Heart left ventricle (tissue), 16 donors: ENCODE measurements at regions of chr10 and their contacts with region 1.

Region 1: DNA sequence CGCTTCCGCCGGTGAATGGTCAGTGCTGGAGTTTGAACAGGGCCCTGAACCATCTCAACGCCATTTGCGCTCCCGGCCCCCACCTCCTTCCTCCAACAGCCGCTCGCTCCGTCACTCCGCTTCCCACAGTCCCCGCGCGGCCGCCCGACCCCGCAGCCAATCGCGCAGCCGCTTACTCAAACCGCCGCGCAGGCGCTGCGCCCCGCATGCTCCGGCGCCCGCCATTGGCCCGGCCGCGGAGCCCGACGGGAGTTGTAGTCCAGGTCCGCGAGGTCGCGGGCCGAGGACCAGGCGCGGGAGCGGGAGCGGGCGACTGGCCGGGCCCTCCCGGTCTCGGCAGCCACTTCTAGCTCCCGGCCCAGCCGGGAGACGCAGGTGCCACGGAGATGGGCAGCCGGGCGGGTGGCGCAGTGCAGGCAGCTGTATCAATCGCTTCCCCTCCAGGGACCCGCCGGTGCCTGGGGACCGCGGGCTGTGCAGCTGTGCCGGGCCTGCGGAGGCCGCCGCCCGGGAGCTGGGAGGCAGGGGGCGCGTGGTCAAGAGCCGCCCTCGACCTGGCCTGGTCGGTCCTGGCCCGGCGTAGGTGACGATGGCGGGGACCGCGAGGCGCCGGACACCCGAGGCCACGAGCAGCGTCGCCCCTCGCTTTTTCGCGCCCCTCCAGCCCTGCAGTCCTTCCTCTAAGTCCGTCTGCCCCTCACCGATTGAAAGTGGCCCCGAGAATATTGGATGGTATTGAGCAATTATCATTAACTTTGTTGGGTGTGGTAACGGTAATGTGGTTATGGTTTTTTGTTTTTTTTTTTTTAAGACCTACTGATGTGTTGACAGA is at the start of gene WAPL:
- DNase-seq: peak; percentile 96 to 97 (median 97)
- ATAC-seq: peak; percentile 97 to 99 (median 98)
- H3K4me3 ChIP-seq: peak within 1 kb of the TSS; percentile 83 to 100 (median 98)
- H3K27ac ChIP-seq: peak within 1 kb of the TSS; percentile 90 to 99 (median 97)
- H3K4me1 ChIP-seq: peaks cover 0 to 69% (median 43%) of the 10 kb centered on the region in 12 donors
- H3K27me3 ChIP-seq: no peaks in the 10 kb centered on the region
- CTCF ChIP-seq: no peak
- POLR2A ChIP-seq: peak in 1 of 2 donors; percentile 86
- total RNA-seq, gene WAPL: 19.7 to 29.9 (median 23.8) TPM

Region 2: DNA sequence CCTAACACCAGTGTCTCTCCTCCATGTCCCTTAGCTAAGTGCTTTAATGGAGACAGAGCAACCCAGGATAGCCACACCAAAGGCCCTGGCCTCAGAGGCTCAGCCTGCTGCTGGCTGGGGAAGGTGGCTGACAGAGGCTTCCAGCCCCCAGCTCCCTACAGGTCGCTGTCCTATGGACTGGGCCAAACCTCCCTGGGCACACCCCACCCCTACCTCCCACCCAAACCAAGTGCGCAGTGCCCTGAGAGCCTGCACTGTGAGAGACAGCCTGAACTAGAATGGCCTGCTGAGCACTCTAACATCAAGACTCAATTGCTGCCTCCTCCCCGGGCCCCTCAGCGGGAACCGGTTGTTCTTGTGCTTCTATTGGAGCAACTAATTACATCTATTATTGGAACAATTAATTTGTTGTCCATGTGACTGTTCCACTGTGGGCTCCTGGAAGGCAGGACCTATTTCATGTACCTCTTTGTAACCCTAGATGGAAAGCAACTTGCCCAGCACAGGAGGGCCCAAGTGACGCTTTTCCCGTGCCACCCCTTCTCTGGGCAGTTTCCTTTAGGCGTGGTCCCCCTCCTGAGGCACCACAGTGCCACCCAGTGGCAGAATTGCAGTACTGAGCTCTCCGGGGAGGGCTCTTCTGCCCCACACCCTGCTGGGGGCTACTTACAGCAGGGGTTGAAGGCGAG is 63.3 kb after region 1 on chr10:
- intact Hi-C with region 1: loop called in 3 of 10 experiments (anchors 2 to 10 kb)
- DNase-seq: peak; percentile 59 to 79 (median 68)
- ATAC-seq: peak; percentile 67 to 94 (median 92)
- H3K4me3 ChIP-seq: peak overlapping the region in 1 of 12 donors; percentile 9
- H3K27ac ChIP-seq: peak overlapping the region in 1 of 12 donors; percentile 58
- H3K4me1 ChIP-seq: peaks cover 0 to 12% (median 4%) of the 10 kb centered on the region in 12 donors
- H3K27me3 ChIP-seq: no peaks in the 10 kb centered on the region
- CTCF ChIP-seq: peak; percentile 87 to 99 (median 94)
- POLR2A ChIP-seq: no peak

Region 3: GRCh38 chr10:86795353-86795752 is 273.5 kb after region 1 on chr10:
- intact Hi-C with region 1: no loop called
- DNase-seq: no peak
- ATAC-seq: peak in 3 of 4 donors; percentile 51 to 72 (median 57)
- H3K4me3 ChIP-seq: no peak overlapping the region
- H3K27ac ChIP-seq: peak overlapping the region in 4 of 12 donors; percentile 1 to 60 (median 11)
- H3K4me1 ChIP-seq: peaks cover 0 to 44% (median 15%) of the 10 kb centered on the region in 12 donors
- H3K27me3 ChIP-seq: no peaks in the 10 kb centered on the region
- CTCF ChIP-seq: no peak
- POLR2A ChIP-seq: no peak